ENCODE measurements at regions of chr7 and their contacts with region 1.

Region 1: DNA sequence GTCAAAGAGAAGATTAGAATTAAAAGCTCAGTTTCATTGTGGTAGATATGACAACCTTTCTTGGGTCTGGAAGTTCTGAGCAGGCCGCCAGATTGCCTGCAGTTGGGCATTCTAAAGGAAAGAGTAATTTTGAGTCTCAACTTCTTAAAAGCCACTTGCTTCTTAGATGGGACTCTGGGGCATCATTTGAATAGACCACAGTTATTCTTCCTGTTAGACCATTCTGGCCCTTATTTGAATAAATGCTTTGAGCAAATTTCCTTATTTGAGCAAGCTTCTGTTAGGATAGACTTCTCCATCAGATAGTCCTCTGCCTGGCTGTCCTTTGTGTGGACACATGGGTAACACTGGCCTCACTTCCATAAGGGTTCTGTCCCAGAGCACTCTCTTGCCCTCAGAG is 40.2 kb downstream of the SND1 start:
- DNase-seq: no peak
- ATAC-seq: no peak
- H3K4me3 ChIP-seq: no peak overlapping the region
- H3K4me3 Mint-ChIP-seq: no peak overlapping the region
- H3K27ac ChIP-seq: no peak overlapping the region
- H3K27ac Mint-ChIP-seq: no peak overlapping the region
- H3K4me1 ChIP-seq: no peaks in the 10 kb centered on the region
- H3K4me1 Mint-ChIP-seq: peaks cover 9 to 19% (median 13%) of the 10 kb centered on the region in 3 donors
- H3K27me3 ChIP-seq: no peaks in the 10 kb centered on the region
- H3K27me3 Mint-ChIP-seq: no peaks in the 10 kb centered on the region

Region 2: GRCh38 chr7:127708788-127709187 is 16.6 kb after region 1 on chr7:
- CTCF ChIA-PET with region 1: interaction called, 5 to 10 read pairs
- POLR2A ChIA-PET with region 1: no interaction called
- DNase-seq: peak; percentile 32 to 84 (median 62)
- ATAC-seq: peak; percentile 57 to 69 (median 64)
- H3K4me3 ChIP-seq: no peak overlapping the region
- H3K4me3 Mint-ChIP-seq: no peak overlapping the region
- H3K27ac ChIP-seq: no peak overlapping the region
- H3K27ac Mint-ChIP-seq: no peak overlapping the region
- H3K4me1 ChIP-seq: no peaks in the 10 kb centered on the region
- H3K4me1 Mint-ChIP-seq: no peaks in the 10 kb centered on the region
- H3K27me3 ChIP-seq: no peaks in the 10 kb centered on the region
- H3K27me3 Mint-ChIP-seq: no peaks in the 10 kb centered on the region